Naive thymus-derived CD4-positive, alpha-beta T cell (primary cell): ENCODE measurements at regions of chr16 and their contacts with region 1.

Region 1: GRCh38 chr16:30922960-30923535 is 324 bp upstream of the FBXL19 start:
- DNase-seq: peak; percentile 74 to 97 (median 95)
- ATAC-seq: peak; percentile 79
- H3K4me3 ChIP-seq: peak overlapping the region; percentile 72
- H3K4me3 Mint-ChIP-seq: peak overlapping the region; percentile 89 to 100 (median 99)
- H3K27ac ChIP-seq: peak overlapping the region; percentile 91
- H3K27ac Mint-ChIP-seq: peak overlapping the region; percentile 92 to 100 (median 99)
- H3K4me1 ChIP-seq: no peaks in the 10 kb centered on the region
- H3K4me1 Mint-ChIP-seq: peaks cover 0 to 32% (median 15%) of the 10 kb centered on the region in 7 donors
- H3K27me3 ChIP-seq: no peaks in the 10 kb centered on the region
- H3K27me3 Mint-ChIP-seq: peaks cover 0 to 3% (median 0%) of the 10 kb centered on the region in 5 donors

Region 2: GRCh38 chr16:30370444-30371247 is 552.4 kb before region 1 on chr16 and contains the start of gene TBC1D10B:
- CTCF ChIA-PET with region 1: no interaction called
- POLR2A ChIA-PET with region 1: no interaction called
- intact Hi-C with region 1: loop called in 1 of 2 experiments (anchors 10 kb)
- DNase-seq: peak; percentile 89 to 100 (median 100)
- ATAC-seq: peak; percentile 91
- H3K4me3 ChIP-seq: peak within 1 kb of the TSS; percentile 76
- H3K4me3 Mint-ChIP-seq: peak within 1 kb of the TSS; percentile 83 to 92 (median 89)
- H3K27ac ChIP-seq: peak within 1 kb of the TSS; percentile 80
- H3K27ac Mint-ChIP-seq: peak within 1 kb of the TSS; percentile 63 to 98 (median 93)
- H3K4me1 ChIP-seq: peaks cover 24 to 25% of the 10 kb centered on the region in 2 donors
- H3K4me1 Mint-ChIP-seq: peaks cover 42 to 54% (median 50%) of the 10 kb centered on the region in 7 donors
- H3K27me3 ChIP-seq: no peaks in the 10 kb centered on the region
- H3K27me3 Mint-ChIP-seq: peaks cover 0 to 3% (median 0%) of the 10 kb centered on the region in 5 donors
- total RNA-seq, gene TBC1D10B: 23.2 to 70.0 (median 45.2) TPM

Region 3: DNA sequence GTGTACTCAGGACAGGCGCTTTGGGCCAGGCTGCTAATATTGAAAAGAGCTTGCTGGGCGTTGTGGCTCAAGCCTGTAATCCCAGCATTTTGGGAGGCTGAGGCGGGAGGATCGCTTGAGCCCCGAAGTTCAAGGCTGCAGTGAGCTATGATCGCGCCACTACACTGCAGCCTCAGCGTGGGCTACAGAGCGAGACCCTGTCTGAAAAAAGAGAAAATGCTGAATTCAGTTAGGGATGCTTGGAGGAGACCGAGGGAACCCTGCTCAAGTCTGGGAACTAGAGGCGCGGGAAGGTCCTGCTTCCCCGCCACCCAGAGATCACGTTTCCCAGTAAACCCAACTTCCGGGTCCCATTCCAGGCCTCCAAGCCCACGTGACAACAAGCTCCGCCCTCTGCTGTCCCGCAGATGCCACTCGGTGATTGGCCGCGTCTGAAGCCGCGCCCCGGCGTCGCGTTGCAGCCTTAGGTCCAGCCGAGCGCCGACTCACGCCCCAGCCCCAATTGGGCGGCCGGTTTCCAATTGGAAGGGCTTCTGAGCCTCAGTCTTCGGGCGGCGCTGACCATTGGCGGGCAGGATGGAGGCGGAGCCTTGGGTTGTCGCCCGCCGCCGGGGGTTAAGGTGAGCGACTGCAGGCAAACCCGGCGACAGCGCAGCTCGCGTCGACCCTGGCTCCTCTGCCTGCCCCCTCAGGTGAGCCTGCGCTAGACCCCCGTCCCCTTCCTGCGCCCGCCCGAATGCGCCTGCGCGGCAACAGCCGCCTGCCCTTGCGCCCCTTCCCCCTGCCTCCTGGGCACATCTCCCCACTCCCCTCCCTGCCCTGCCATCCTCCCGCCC is 175.0 kb before region 1 on chr16 and contains the start of gene PHKG2:
- CTCF ChIA-PET with region 1: no interaction called
- POLR2A ChIA-PET with region 1: no interaction called
- intact Hi-C with region 1: loop called (anchors 1 kb)
- DNase-seq: peak; percentile 82 to 95 (median 92)
- ATAC-seq: peak; percentile 99
- H3K4me3 ChIP-seq: peak within 1 kb of the TSS; percentile 51
- H3K4me3 Mint-ChIP-seq: peak within 1 kb of the TSS; percentile 78 to 98 (median 90)
- H3K27ac ChIP-seq: peak within 1 kb of the TSS; percentile 75
- H3K27ac Mint-ChIP-seq: peak within 1 kb of the TSS; percentile 82 to 95 (median 90)
- H3K4me1 ChIP-seq: peaks cover 4 to 6% of the 10 kb centered on the region in 2 donors
- H3K4me1 Mint-ChIP-seq: peaks cover 18 to 29% (median 27%) of the 10 kb centered on the region in 7 donors
- H3K27me3 ChIP-seq: no peaks in the 10 kb centered on the region
- H3K27me3 Mint-ChIP-seq: no peaks in the 10 kb centered on the region
- total RNA-seq, gene PHKG2: 33.2 to 57.8 (median 46.7) TPM

Region 4: DNA sequence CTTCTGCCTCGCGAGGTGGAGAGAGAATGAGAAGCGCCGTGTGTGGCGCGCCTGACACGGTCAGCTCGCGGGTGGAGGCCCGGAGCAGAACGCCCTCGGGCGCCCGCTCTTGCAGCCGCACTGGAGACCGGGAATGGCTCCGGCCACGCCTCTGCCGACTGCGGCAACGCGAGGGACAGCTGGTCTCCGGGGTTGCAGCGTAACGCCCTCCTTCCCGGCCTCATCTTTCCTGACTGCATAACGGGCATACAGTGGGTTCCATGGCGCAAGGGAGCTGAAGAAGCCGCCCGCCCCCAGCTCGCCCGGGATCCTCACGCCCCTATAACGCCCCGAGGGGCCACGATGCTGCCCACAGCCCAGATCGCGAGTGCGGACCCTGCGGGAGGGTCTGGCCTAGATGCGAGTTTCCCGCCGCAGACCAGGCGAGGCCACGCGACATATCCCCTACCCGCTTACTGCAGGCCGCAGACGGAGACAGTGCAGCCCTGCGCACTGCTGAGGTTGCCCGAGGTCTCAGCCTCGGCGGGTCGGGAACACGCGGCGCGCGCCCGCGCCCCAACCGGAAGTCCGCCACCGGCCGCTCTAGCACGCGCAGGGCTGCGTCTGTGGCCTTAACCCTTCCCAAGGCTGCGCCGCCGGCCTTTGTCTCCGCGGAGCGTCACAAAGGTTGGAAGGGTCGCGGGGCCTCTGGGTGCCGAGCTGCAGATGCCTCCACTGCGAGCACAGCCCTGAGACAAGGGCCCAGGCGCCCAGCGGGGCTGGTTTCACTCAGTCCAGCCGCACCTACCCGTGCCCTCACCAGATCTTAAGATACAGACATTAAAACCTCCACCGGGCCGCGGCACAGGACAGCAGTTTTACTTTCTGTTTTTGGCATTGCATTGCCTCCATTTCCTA is 48.0 kb before region 1 on chr16:
- CTCF ChIA-PET with region 1: no interaction called
- POLR2A ChIA-PET with region 1: interaction called, 4 read pairs
- intact Hi-C with region 1: loop called (anchors 1 kb)
- DNase-seq: peak; percentile 78 to 90 (median 87)
- ATAC-seq: peak; percentile 97
- H3K4me3 ChIP-seq: peak overlapping the region; percentile 83
- H3K4me3 Mint-ChIP-seq: peak overlapping the region; percentile 84 to 98 (median 97)
- H3K27ac ChIP-seq: peak overlapping the region; percentile 87
- H3K27ac Mint-ChIP-seq: peak overlapping the region; percentile 79 to 99 (median 95)
- H3K4me1 ChIP-seq: peaks cover 11 to 25% of the 10 kb centered on the region in 2 donors
- H3K4me1 Mint-ChIP-seq: peaks cover 21 to 40% (median 32%) of the 10 kb centered on the region in 7 donors
- H3K27me3 ChIP-seq: no peaks in the 10 kb centered on the region
- H3K27me3 Mint-ChIP-seq: no peaks in the 10 kb centered on the region

Region 5: GRCh38 chr16:30912794-30913412 is 10.1 kb before region 1 on chr16:
- CTCF ChIA-PET with region 1: no interaction called
- POLR2A ChIA-PET with region 1: no interaction called
- intact Hi-C with region 1: no loop called
- DNase-seq: no peak
- ATAC-seq: no peak
- H3K4me3 ChIP-seq: no peak overlapping the region
- H3K4me3 Mint-ChIP-seq: no peak overlapping the region
- H3K27ac ChIP-seq: no peak overlapping the region
- H3K27ac Mint-ChIP-seq: peak overlapping the region in 1 of 9 donors; percentile 2
- H3K4me1 ChIP-seq: peaks cover 0 to 4% of the 10 kb centered on the region in 2 donors
- H3K4me1 Mint-ChIP-seq: peaks cover 1 to 3% (median 2%) of the 10 kb centered on the region in 7 donors
- H3K27me3 ChIP-seq: no peaks in the 10 kb centered on the region
- H3K27me3 Mint-ChIP-seq: no peaks in the 10 kb centered on the region

Region 6: DNA sequence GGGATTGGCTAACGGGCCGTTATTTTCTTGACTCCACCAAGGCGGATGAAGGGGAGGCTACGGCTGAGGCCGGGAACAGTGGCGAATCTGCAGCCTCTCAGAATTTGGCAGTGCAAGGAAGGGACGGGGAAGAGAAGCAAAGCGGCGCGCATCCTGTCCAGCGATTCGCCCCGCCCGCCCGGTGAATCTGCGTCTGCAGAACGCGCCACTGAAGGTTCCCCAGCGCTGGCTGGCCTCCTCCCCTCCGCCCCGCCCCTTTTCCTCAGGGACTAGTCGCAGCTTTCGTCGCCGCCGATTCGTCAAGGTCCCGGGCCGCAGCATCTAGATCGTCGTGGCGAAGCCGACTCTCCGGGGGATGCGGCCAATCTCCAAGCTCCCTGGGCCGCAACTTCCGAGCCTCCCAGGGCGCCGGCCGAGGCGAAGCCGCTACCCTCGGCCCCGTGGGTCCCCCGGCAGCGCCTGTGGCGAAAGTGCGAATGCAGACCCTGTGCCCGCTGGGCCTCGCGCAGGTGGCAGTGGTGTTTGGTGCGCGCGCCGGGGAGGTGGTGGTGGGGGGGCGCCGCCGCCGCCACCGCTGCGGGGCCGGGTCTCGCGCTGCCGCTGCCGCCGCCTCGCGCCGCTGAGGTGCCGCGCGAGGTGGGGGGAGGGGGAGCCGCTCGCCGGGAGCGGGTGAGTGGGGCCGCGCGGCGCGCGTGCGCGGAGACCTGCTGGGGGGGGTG is 34.6 kb after region 1 on chr16 and contains the start of gene SETD1A:
- CTCF ChIA-PET with region 1: no interaction called
- POLR2A ChIA-PET with region 1: no interaction called
- intact Hi-C with region 1: loop called (anchors 1 kb)
- DNase-seq: peak; percentile 94 to 99 (median 97)
- ATAC-seq: peak; percentile 93
- H3K4me3 ChIP-seq: peak within 1 kb of the TSS; percentile 100
- H3K4me3 Mint-ChIP-seq: peak within 1 kb of the TSS; percentile 81 to 97 (median 96)
- H3K27ac ChIP-seq: peak within 1 kb of the TSS; percentile 93
- H3K27ac Mint-ChIP-seq: peak within 1 kb of the TSS; percentile 97 to 100 (median 98)
- H3K4me1 ChIP-seq: peaks cover 16 to 22% of the 10 kb centered on the region in 2 donors
- H3K4me1 Mint-ChIP-seq: peaks cover 23 to 46% (median 29%) of the 10 kb centered on the region in 7 donors
- H3K27me3 ChIP-seq: no peaks in the 10 kb centered on the region
- H3K27me3 Mint-ChIP-seq: peaks cover 0 to 3% (median 0%) of the 10 kb centered on the region in 5 donors
- total RNA-seq, gene SETD1A: 27.0 to 47.2 (median 36.8) TPM

Region 7: GRCh38 chr16:31038993-31039392 is 115.9 kb after region 1 on chr16:
- CTCF ChIA-PET with region 1: no interaction called
- POLR2A ChIA-PET with region 1: no interaction called
- intact Hi-C with region 1: no loop called
- DNase-seq: no peak
- ATAC-seq: no peak
- H3K4me3 ChIP-seq: no peak overlapping the region
- H3K4me3 Mint-ChIP-seq: no peak overlapping the region
- H3K27ac ChIP-seq: no peak overlapping the region
- H3K27ac Mint-ChIP-seq: no peak overlapping the region
- H3K4me1 ChIP-seq: peaks cover 4 to 6% of the 10 kb centered on the region in 2 donors
- H3K4me1 Mint-ChIP-seq: peaks cover 8 to 17% (median 14%) of the 10 kb centered on the region in 7 donors
- H3K27me3 ChIP-seq: no peaks in the 10 kb centered on the region
- H3K27me3 Mint-ChIP-seq: no peaks in the 10 kb centered on the region

Region 8: DNA sequence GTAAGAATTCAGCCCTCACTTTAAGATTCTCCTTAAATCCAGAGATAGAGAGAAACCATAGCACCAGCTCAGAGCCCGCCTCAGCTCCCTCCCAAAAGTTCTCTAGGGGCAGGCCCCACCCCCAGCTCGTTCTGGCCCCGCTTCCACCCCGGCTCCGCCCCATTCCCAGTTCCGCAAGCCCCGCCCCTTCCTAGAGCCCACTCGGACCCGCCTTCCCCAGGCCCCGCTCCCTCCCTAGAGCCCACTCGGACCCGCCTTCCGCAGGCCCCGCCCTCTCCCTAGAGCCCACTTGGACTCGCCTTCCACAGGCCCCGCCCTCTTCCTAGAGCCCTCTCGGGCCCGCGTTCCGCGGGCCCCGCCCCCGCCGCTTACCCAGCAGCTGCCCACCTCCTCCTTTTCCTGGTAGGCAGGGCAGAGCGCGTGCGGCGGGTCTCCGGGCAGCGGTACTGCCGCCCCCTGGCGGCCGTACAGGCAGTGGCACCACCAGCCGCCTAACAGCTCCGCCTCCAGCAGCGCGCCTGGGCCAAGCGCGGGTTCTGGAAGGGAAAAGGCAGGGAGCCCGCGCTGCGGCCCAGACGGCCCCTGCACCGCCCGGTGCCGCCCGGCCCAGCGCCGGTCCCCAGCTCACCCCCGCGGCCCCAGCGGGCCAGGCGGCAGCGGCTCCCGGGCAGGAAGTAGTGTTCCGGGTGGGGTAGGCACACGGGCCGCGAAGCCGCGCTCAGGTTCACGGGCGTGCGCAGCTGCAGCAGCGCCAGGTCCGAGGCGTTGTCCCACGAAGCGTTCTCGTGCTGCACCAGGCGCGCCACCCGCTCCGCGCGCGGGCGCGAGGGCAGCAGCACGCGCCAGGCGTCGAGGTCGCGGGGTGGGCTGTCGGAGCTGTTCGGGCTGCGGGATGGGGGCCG is 219.3 kb after region 1 on chr16:
- CTCF ChIA-PET with region 1: no interaction called
- POLR2A ChIA-PET with region 1: no interaction called
- intact Hi-C with region 1: loop called in 1 of 2 experiments (anchors 1 kb)
- DNase-seq: peak; percentile 91 to 98 (median 95)
- ATAC-seq: peak; percentile 95
- H3K4me3 ChIP-seq: peak overlapping the region; percentile 68
- H3K4me3 Mint-ChIP-seq: peak overlapping the region; percentile 61 to 84 (median 72)
- H3K27ac ChIP-seq: peak overlapping the region; percentile 74
- H3K27ac Mint-ChIP-seq: peak overlapping the region; percentile 73 to 94 (median 84)
- H3K4me1 ChIP-seq: peaks cover 6 to 14% of the 10 kb centered on the region in 2 donors
- H3K4me1 Mint-ChIP-seq: peaks cover 0 to 17% (median 14%) of the 10 kb centered on the region in 7 donors
- H3K27me3 ChIP-seq: no peaks in the 10 kb centered on the region
- H3K27me3 Mint-ChIP-seq: peaks cover 0 to 3% (median 0%) of the 10 kb centered on the region in 5 donors

Region 9: DNA sequence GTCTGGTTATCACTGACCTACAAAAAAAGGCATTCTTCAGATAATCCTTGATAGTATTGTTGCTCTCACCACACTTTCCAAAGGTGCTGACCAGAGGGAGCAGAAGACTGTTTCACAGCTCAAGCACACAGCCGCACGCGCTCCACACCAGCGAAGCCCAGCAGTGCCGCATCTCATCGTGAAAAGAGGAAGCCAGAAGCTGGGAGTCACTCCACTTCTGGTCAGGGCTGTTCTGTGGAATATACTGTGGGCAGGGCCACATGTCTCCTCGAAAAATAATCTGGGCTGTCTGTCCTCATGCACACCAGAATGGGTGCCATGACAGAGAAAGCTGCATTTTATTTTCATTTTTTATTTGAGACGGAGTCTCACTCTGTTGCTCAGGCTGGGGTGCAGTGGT is 234.1 kb after region 1 on chr16:
- CTCF ChIA-PET with region 1: no interaction called
- POLR2A ChIA-PET with region 1: no interaction called
- intact Hi-C with region 1: no loop called
- DNase-seq: no peak
- ATAC-seq: peak; percentile 74
- H3K4me3 ChIP-seq: no peak overlapping the region
- H3K4me3 Mint-ChIP-seq: peak overlapping the region in 8 of 10 donors; percentile 7 to 66 (median 36)
- H3K27ac ChIP-seq: no peak overlapping the region
- H3K27ac Mint-ChIP-seq: peak overlapping the region in 3 of 9 donors; percentile 16 to 38 (median 25)
- H3K4me1 ChIP-seq: no peaks in the 10 kb centered on the region
- H3K4me1 Mint-ChIP-seq: peaks cover 0 to 12% (median 10%) of the 10 kb centered on the region in 7 donors
- H3K27me3 ChIP-seq: no peaks in the 10 kb centered on the region
- H3K27me3 Mint-ChIP-seq: peaks cover 0 to 17% (median 0%) of the 10 kb centered on the region in 5 donors